Activated CD4-positive, alpha-beta memory T cell treated with anti-CD3 and anti-CD28 coated beads, Interleukin-2, amount 10 ng/mL, durations not matched to agents 7 days and 5 days (primary cell): ENCODE measurements at regions of chr19 and their contacts with region 1.

Region 1: GRCh38 chr19:4342615-4343369 is 570 bp upstream of the MPND start:
- DNase-seq: peak; percentile 96
- H3K4me3 Mint-ChIP-seq: peak overlapping the region; percentile 90
- H3K27ac Mint-ChIP-seq: peak overlapping the region; percentile 90
- H3K4me1 Mint-ChIP-seq: peaks cover 36% of the 10 kb centered on the region
- H3K27me3 Mint-ChIP-seq: no peaks in the 10 kb centered on the region

Region 2: DNA sequence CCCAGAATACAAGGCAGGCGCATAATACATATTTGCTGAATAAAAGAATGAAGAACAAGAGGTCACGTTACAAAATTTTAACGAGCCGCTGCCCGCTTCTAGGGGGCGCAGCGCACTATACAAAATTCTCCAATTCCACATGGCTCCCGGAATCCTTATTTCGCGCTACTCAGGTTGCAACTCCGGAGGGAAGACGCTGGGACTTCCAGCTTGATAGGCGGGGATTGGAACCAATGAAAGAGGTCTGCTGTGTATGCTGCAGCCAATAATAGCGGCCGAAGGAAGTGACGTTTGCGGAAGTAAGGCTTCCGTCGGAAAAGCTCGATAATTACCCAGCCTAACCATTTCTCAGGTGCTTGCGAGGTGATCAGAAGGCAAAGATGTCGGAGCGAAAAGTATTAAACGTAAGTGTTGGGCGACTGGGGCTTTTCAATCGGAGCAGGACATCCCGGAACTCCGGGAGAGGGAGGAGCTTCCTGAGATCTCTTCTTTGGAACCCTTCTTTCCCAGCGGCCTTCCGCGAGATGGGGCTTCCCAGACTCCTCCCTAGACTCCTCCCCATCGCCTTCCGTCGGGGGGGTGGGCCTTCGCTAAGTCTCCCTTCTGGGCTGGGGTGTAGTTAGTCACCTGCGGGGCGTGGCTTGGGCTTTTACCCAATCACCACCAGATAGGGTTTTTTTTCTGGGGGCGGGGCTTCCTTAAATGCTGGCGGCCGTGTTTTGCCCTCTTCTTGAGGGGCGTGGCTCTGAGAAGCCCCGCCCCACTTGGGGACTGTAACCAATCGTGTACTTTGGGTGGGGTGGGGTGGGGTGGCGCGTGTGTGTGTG is 95.8 kb before region 1 on chr19 and contains the start of gene YJU2:
- CTCF ChIA-PET with region 1: no interaction called
- POLR2A ChIA-PET with region 1: interaction called, 12 read pairs
- DNase-seq: peak; percentile 99
- H3K4me3 Mint-ChIP-seq: peak within 1 kb of the TSS; percentile 80
- H3K27ac Mint-ChIP-seq: peak within 1 kb of the TSS; percentile 89
- H3K4me1 Mint-ChIP-seq: peaks cover 19% of the 10 kb centered on the region
- H3K27me3 Mint-ChIP-seq: peaks cover 2% of the 10 kb centered on the region
- total RNA-seq, gene YJU2: 21.7 to 25.3 TPM

Region 3: DNA sequence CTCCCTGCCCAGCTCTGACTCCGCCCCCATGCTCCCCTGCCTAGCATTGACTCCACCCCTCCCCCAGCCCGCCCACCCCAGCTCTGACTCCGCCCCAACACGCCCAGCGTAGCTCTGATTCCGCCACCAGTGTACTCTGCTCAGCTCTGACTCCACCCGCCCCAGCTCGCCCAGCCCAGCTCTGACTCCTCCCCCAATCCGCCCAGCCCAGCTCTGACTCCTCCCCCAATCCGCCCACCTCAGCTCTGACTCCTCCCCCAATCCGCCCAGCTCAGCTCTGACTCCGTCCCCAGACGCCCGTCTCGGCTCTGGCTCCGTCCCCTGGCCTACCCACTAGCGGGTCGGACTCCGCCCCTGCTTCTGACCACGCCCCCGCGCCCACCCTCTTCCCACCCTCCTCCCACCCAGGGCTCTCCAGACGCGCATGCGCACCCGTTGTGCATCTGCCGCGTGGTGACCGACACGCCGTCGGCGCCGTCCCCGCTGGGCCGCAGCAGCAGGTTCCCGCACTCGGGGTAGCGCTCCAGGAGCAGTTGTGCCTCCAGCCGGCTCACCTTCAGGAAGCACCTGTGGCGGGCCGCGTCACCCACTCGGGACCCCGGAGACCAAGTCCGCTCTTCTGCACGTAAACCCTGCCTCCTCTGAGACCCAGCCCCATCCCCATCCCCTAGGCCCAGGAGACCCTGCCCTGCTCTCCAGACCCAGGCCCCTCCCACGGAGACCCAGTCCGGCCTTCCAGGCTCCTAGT is 14.4 kb before region 1 on chr19:
- CTCF ChIA-PET with region 1: interaction called, 7 read pairs
- POLR2A ChIA-PET with region 1: interaction called, 15 read pairs
- DNase-seq: peak; percentile 95
- H3K4me3 Mint-ChIP-seq: peak overlapping the region; percentile 74
- H3K27ac Mint-ChIP-seq: peak overlapping the region; percentile 71
- H3K4me1 Mint-ChIP-seq: peaks cover 28% of the 10 kb centered on the region
- H3K27me3 Mint-ChIP-seq: peaks cover 9% of the 10 kb centered on the region

Region 4: GRCh38 chr19:4369888-4370260 is 27.1 kb after region 1 on chr19:
- CTCF ChIA-PET with region 1: interaction called, 4 read pairs
- POLR2A ChIA-PET with region 1: interaction called, 22 read pairs
- DNase-seq: peak; percentile 82
- H3K4me3 Mint-ChIP-seq: peak overlapping the region; percentile 73
- H3K27ac Mint-ChIP-seq: peak overlapping the region; percentile 97
- H3K4me1 Mint-ChIP-seq: peaks cover 61% of the 10 kb centered on the region
- H3K27me3 Mint-ChIP-seq: no peaks in the 10 kb centered on the region

Region 5: DNA sequence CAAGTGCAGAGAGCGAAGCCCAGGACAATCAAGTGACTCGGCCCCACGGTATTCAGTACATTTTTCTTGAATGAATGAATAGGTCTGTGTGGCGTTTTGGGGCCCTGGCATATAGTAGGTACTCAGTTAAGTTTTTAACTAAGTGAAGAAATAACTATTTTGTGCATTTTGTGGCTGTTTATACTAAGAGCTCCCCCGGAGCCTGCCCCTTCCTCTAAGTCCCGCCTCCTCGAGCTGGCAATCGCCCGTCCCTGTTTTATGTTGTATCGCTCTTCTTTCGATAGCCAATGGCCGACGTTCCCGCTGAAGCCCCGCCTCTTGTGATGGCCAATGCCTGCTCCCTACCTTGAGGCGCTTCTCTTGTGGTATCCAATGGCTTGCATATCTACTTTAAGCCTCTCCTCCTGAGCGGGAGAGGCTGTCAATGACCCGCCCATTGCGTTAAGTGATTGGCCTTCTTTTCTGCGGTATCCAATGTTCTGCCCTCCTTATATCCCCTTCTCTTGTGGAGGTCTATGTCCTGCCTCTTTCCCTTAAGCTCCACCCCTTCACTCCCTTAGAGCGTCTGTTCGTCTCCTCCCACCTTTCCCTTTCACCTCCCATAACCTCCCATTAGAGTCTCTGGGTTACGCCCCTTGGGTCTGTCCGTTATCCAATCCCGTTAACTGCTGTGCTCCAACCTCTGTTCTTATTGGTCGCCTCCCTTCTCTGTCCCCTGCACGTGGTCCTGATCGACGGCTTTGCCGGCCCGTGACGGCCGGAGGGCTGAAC is 128.8 kb after region 1 on chr19:
- CTCF ChIA-PET with region 1: no interaction called
- POLR2A ChIA-PET with region 1: interaction called, 12 read pairs
- DNase-seq: peak; percentile 98
- H3K4me3 Mint-ChIP-seq: no peak overlapping the region
- H3K27ac Mint-ChIP-seq: no peak overlapping the region
- H3K4me1 Mint-ChIP-seq: peaks cover 27% of the 10 kb centered on the region
- H3K27me3 Mint-ChIP-seq: no peaks in the 10 kb centered on the region